Activated B cell treated with CpG ODN at 0.5 μM for 24 hours (primary cell): ENCODE measurements at regions of chr12 and their contacts with region 1.

Region 1: GRCh38 chr12:119044094-119044493 is 62.8 kb downstream of the SRRM4 start:
- DNase-seq: no peak
- ATAC-seq: no peak
- H3K4me3 Mint-ChIP-seq: no peak overlapping the region
- H3K27ac Mint-ChIP-seq: no peak overlapping the region
- H3K4me1 Mint-ChIP-seq: no peaks in the 10 kb centered on the region
- H3K27me3 Mint-ChIP-seq: no peaks in the 10 kb centered on the region
- CTCF ChIP-seq: no peak

Region 2: GRCh38 chr12:118840399-118840798 is 203.7 kb before region 1 on chr12:
- CTCF ChIA-PET with region 1: no interaction called
- POLR2A ChIA-PET with region 1: no interaction called
- intact Hi-C with region 1: loop called (anchors 10 kb)
- DNase-seq: no peak
- ATAC-seq: no peak
- H3K4me3 Mint-ChIP-seq: no peak overlapping the region
- H3K27ac Mint-ChIP-seq: no peak overlapping the region
- H3K4me1 Mint-ChIP-seq: no peaks in the 10 kb centered on the region
- H3K27me3 Mint-ChIP-seq: no peaks in the 10 kb centered on the region
- CTCF ChIP-seq: no peak